ENCODE measurements at regions of chr11 and their contacts with region 1.

Region 1: DNA sequence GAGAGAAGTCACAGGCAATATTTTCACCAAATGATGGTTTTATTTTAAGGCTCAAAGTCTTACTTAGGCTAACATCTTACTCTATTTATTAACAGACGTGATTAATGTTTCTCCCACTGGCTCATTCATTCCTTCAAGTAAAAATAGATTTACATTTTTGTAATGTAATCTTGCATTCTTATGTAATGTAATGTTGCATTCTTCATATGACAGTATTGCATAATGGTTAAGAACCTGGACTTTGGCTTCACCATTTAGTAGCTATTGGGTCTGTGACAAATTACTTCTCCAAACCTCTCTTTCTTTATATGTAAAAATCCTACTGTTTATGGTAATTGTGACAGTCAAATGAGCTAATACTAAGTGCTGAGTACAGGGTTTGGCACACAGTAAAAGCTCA is 3.3 kb upstream of the DIXDC1 start:
- DNase-seq: no peak
- H3K4me3 ChIP-seq: no peak overlapping the region
- H3K27ac ChIP-seq: peak overlapping the region; percentile 3
- H3K4me1 ChIP-seq: peaks cover 44% of the 10 kb centered on the region
- H3K27me3 ChIP-seq: no peaks in the 10 kb centered on the region
- CTCF ChIP-seq: no peak

Region 2: GRCh38 chr11:111977146-111978027 is 43.5 kb after region 1 on chr11:
- intact Hi-C with region 1: loop called (anchors 5 kb)
- DNase-seq: peak; percentile 72
- H3K4me3 ChIP-seq: peak overlapping the region; percentile 78
- H3K27ac ChIP-seq: peak overlapping the region; percentile 87
- H3K4me1 ChIP-seq: peaks cover 64% of the 10 kb centered on the region
- H3K27me3 ChIP-seq: peaks cover 6% of the 10 kb centered on the region
- CTCF ChIP-seq: no peak

Measured in left ventricle myocardium inferior (tissue), 1 donor.